ENCODE measurements at regions of chr1 and their contacts with region 1.

Region 1: GRCh38 chr1:178310685-178311105 is 186.1 kb downstream of the CLEC20A start:
- DNase-seq: no peak
- H3K4me3 ChIP-seq: no peak overlapping the region
- H3K27ac ChIP-seq: no peak overlapping the region
- H3K4me1 ChIP-seq: no peaks in the 10 kb centered on the region
- H3K27me3 ChIP-seq: no peaks in the 10 kb centered on the region
- CTCF ChIP-seq: peak; percentile 23 to 69 (median 56)
- EP300 ChIP-seq: no peak
- POLR2A ChIP-seq: no peak

Region 2: DNA sequence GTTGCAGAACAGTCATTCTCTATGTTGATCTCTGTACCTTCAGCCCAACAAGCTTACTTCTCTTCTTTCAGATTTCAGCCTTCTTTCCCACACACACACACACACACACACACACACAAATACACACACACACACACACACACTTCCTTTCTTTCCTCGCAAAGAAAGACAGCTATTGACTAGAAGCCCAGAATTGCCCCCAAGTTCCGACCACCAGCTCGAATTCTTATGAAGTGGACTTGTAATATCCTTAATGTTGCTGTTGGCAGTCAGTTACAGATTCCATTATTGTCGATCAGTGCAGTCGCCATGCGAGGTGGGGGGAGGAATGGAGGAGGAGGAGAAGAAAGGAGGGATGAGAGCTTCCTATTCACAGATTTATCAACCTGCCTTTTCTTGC is 60.5 kb after region 1 on chr1:
- intact Hi-C with region 1: no loop called
- DNase-seq: no peak
- H3K4me3 ChIP-seq: no peak overlapping the region
- H3K27ac ChIP-seq: no peak overlapping the region
- H3K4me1 ChIP-seq: no peaks in the 10 kb centered on the region
- H3K27me3 ChIP-seq: no peaks in the 10 kb centered on the region
- CTCF ChIP-seq: no peak
- EP300 ChIP-seq: no peak
- POLR2A ChIP-seq: no peak

Region 3: GRCh38 chr1:178501705-178502329 is 191.1 kb after region 1 on chr1:
- intact Hi-C with region 1: loop called in 1 of 4 experiments (anchors 5 kb)
- DNase-seq: peak; percentile 31 to 79 (median 67)
- H3K4me3 ChIP-seq: no peak overlapping the region
- H3K27ac ChIP-seq: no peak overlapping the region
- H3K4me1 ChIP-seq: no peaks in the 10 kb centered on the region
- H3K27me3 ChIP-seq: no peaks in the 10 kb centered on the region
- CTCF ChIP-seq: peak in 2 of 3 donors; percentile 44 to 50
- EP300 ChIP-seq: no peak
- POLR2A ChIP-seq: no peak

Measured in ovary (tissue), 10 donors.